PC-3 (cell line): ENCODE measurements at regions of chr18 and their contacts with region 1.

Region 1: GRCh38 chr18:56575819-56576663 is 62.4 kb downstream of the TXNL1 start:
- DNase-seq: peak; percentile 80
- ATAC-seq: peak; percentile 91
- H3K4me3 ChIP-seq: no peak overlapping the region
- H3K27ac ChIP-seq: no peak overlapping the region
- H3K4me1 ChIP-seq: 0 out of 2 replicates have a peak, but pooled peaks cover 8% of the 10 kb centered on the region
- H3K27me3 ChIP-seq: no peaks in the 10 kb centered on the region
- CTCF ChIP-seq: peak; percentile 87

Region 2: GRCh38 chr18:55251254-55251971 is 1324.6 kb before region 1 on chr18:
- CTCF ChIA-PET with region 1: no interaction called
- POLR2A ChIA-PET with region 1: no interaction called
- intact Hi-C with region 1: loop called (anchors 10 kb)
- DNase-seq: peak; percentile 82
- ATAC-seq: peak; percentile 87
- H3K4me3 ChIP-seq: peak overlapping the region; percentile 56
- H3K27ac ChIP-seq: peak overlapping the region; percentile 86
- H3K4me1 ChIP-seq: peaks cover 47% of the 10 kb centered on the region
- H3K27me3 ChIP-seq: no peaks in the 10 kb centered on the region
- CTCF ChIP-seq: no peak

Region 3: DNA sequence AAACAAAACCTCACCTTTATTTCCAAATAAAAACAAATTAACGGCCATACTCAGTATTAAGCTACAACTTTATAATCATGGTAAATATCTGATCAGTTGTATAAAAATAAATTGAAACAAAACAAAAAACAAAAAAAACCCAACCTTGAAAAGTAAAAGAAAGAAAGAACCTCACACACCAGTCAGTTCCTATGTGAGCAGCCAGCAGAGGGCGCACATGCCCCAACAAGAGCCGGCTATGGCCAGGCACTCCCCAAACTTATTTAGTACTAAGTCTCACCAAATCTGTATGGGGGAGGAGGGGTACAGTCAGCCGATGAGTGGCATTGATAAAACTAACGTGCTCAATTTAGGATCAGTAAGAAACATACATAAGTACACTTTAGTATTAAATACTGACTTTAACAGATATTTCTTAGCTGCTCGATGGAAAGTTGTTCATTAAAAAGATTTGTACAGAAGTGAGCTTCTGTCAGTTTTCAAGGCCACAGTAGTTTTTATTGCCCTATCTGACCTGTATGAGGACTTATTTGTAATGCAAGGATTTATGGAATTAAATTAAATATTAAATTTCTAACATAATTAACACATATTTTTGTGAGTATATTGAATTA is 1160.7 kb before region 1 on chr18:
- CTCF ChIA-PET with region 1: no interaction called
- POLR2A ChIA-PET with region 1: no interaction called
- intact Hi-C with region 1: loop called (anchors 2 kb)
- DNase-seq: peak; percentile 74
- ATAC-seq: peak; percentile 91
- H3K4me3 ChIP-seq: no peak overlapping the region
- H3K27ac ChIP-seq: no peak overlapping the region
- H3K4me1 ChIP-seq: peaks cover 10% of the 10 kb centered on the region; the same call in 1 of the 2 replicates
- H3K27me3 ChIP-seq: no peaks in the 10 kb centered on the region
- CTCF ChIP-seq: peak; percentile 96

Region 4: DNA sequence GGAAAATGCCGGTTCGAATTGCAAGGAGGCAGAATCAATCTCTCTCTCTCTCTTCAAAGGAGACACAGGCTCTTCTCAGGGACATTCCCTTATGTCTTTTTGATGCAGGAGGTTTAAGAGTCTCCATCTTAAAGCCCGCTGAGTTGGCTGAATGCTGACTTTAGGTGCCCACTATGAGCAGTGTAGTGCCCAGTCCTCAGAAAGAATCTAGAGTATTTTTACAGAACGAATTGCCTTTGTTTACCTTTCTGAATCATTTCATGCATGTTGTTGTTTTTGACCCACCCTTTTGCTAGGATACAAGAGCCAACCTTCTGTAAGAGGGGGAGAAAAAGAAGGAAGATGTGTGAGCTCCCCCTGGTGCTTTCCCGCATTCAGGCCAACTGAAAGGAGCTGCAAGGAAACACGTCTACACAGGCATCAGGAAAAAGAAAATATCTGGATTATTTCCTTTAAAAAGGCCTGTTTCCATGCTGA is 794.5 kb before region 1 on chr18:
- CTCF ChIA-PET with region 1: no interaction called
- POLR2A ChIA-PET with region 1: no interaction called
- intact Hi-C with region 1: loop called (anchors 5 kb)
- DNase-seq: peak; percentile 69
- ATAC-seq: peak; percentile 71
- H3K4me3 ChIP-seq: no peak overlapping the region
- H3K27ac ChIP-seq: no peak overlapping the region
- H3K4me1 ChIP-seq: peaks cover 9% of the 10 kb centered on the region; the same call in 1 of the 2 replicates
- H3K27me3 ChIP-seq: no peaks in the 10 kb centered on the region
- CTCF ChIP-seq: peak; percentile 89

Region 5: GRCh38 chr18:56358608-56359280 is 217.3 kb before region 1 on chr18:
- CTCF ChIA-PET with region 1: interaction called, 5 read pairs
- POLR2A ChIA-PET with region 1: no interaction called
- intact Hi-C with region 1: loop called (anchors 1 kb)
- DNase-seq: peak; percentile 41
- ATAC-seq: peak; percentile 71
- H3K4me3 ChIP-seq: no peak overlapping the region
- H3K27ac ChIP-seq: no peak overlapping the region
- H3K4me1 ChIP-seq: no peaks in the 10 kb centered on the region
- H3K27me3 ChIP-seq: no peaks in the 10 kb centered on the region
- CTCF ChIP-seq: peak; percentile 59

Region 6: GRCh38 chr18:56458770-56459712 is 117.0 kb before region 1 on chr18:
- CTCF ChIA-PET with region 1: no interaction called
- POLR2A ChIA-PET with region 1: no interaction called
- intact Hi-C with region 1: no loop called
- DNase-seq: no peak
- ATAC-seq: no peak
- H3K4me3 ChIP-seq: no peak overlapping the region
- H3K27ac ChIP-seq: no peak overlapping the region
- H3K4me1 ChIP-seq: peaks cover 3% of the 10 kb centered on the region; the same call in 1 of the 2 replicates
- H3K27me3 ChIP-seq: no peaks in the 10 kb centered on the region
- CTCF ChIP-seq: no peak